ENCODE measurements at regions of chr11 and their contacts with region 1.

Region 1: GRCh38 chr11:108654994-108655631 is 9.8 kb upstream of the DDX10 start:
- DNase-seq: peak; percentile 63
- H3K4me3 ChIP-seq: no peak overlapping the region
- H3K27ac ChIP-seq: no peak overlapping the region
- H3K4me1 ChIP-seq: no peaks in the 10 kb centered on the region
- H3K27me3 ChIP-seq: no peaks in the 10 kb centered on the region
- CTCF ChIP-seq: peak; percentile 51

Region 2: DNA sequence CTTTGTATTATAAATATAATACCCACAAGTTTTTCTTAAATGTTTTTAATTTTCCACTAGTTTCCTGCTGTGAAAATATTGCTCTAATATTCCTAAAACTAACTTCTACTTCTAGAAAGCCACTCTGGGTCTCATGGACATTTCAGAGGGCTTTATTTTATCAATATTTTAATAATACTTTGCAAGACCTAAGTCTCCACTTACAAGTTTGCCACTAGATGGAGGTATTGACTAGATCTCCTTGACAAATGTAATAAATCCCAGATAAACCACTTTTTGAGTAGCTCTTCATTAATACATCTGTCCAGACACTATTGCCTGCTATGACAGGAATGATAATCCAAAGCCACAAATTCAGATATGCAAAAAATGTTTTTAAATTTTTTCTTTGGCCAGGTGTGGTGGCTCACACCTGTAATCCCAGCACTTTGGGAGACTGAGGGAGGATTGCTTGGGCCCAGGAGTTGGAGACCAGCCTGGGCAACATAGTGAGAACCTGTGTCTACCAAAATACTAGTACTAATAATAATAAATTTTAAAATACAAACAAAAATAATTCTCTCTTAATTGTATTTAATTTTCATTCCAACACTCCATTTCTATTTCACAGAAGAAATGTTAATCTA is 537.3 kb before region 1 on chr11:
- intact Hi-C with region 1: loop called (anchors 10 kb)
- DNase-seq: no peak
- H3K4me3 ChIP-seq: no peak overlapping the region
- H3K27ac ChIP-seq: no peak overlapping the region
- H3K4me1 ChIP-seq: peaks cover 9% of the 10 kb centered on the region
- H3K27me3 ChIP-seq: no peaks in the 10 kb centered on the region
- CTCF ChIP-seq: peak; percentile 48

Region 3: GRCh38 chr11:108414958-108415357 is 240.2 kb before region 1 on chr11:
- intact Hi-C with region 1: loop called (anchors 5 kb)
- DNase-seq: no peak
- H3K4me3 ChIP-seq: no peak overlapping the region
- H3K27ac ChIP-seq: no peak overlapping the region
- H3K4me1 ChIP-seq: no peaks in the 10 kb centered on the region
- H3K27me3 ChIP-seq: no peaks in the 10 kb centered on the region
- CTCF ChIP-seq: no peak

Region 4: DNA sequence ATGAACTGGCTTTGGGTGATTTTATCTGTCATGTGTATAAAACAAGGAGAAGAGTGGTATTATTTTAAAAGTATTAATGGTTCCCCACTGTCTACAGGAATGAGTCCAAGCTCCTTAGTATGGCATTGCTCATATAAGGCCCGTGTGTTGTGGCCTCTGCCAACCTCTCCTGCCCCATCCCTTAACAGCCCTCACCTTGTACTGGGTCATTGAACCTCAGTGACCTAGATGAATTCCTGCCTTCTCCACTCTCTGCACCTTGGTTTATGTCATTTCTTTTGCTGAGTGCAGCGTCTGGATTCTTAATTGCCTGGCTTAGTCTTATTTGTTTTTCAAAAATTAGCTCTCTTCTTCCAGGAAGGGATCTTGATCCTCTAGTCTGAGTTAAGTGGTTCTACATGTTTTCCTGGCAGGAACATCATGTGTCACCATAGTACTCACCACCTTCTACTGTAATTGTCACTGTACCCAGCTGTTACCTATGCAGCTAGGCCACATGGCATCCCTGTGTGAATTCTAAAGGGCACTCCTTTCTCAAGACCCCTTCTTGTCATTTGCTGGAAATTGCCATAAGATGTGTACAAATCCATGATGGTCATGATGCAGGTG is 120.7 kb before region 1 on chr11:
- intact Hi-C with region 1: no loop called
- DNase-seq: no peak
- H3K4me3 ChIP-seq: no peak overlapping the region
- H3K27ac ChIP-seq: no peak overlapping the region
- H3K4me1 ChIP-seq: peaks cover 8% of the 10 kb centered on the region
- H3K27me3 ChIP-seq: no peaks in the 10 kb centered on the region
- CTCF ChIP-seq: no peak

Region 5: GRCh38 chr11:108768370-108768769 is 113.3 kb after region 1 on chr11:
- intact Hi-C with region 1: no loop called
- DNase-seq: no peak
- H3K4me3 ChIP-seq: no peak overlapping the region
- H3K27ac ChIP-seq: no peak overlapping the region
- H3K4me1 ChIP-seq: no peaks in the 10 kb centered on the region
- H3K27me3 ChIP-seq: no peaks in the 10 kb centered on the region
- CTCF ChIP-seq: no peak

Measured in colonic mucosa (tissue), 4 donors.